Ovary (tissue), 10 donors: ENCODE measurements at regions of chrX and their contacts with region 1.

Region 1: DNA sequence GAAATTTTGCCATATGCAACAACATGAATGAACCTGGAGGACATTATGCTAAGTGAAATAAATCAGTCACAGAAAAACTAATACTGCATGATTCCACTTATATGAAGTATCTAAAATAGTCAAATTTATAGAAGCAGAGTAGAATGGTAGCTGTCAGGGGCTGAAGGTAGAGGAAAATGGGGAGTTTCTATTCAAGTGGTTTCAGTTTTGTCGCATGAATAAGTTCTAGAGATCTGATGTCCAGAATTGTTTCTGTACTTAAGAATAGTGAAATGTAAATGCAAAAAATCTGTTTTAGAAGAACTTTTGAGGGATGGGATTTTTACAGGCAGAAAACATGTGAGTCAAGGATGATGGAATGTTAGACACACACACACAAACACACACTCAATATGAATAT is 34.1 kb downstream of the SLITRK4 start:
- DNase-seq: no peak
- H3K4me3 ChIP-seq: no peak overlapping the region
- H3K27ac ChIP-seq: no peak overlapping the region
- H3K4me1 ChIP-seq: no peaks in the 10 kb centered on the region
- H3K27me3 ChIP-seq: no peaks in the 10 kb centered on the region
- CTCF ChIP-seq: no peak
- EP300 ChIP-seq: no peak
- POLR2A ChIP-seq: no peak

Region 2: DNA sequence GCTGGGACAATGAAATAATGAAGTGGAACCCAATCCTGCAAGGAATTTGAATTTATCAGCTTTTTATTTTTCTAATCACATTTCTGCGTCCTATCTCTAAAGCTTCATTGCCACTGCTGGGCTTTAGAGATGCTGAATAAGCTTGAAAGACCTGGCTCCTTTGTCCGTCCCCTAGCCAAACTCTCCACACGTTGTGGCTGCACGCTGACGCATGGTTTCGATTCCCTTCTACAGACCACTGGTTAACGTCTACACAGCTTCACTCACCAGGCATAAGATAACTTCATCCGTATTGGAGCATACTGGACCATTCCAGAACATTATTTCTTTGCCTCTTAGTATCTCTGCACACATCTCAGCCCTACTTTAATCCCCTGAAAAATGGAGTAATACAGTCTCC is 115.7 kb before region 1 on chrX:
- intact Hi-C with region 1: no loop called
- DNase-seq: no peak
- H3K4me3 ChIP-seq: no peak overlapping the region
- H3K27ac ChIP-seq: no peak overlapping the region
- H3K4me1 ChIP-seq: no peaks in the 10 kb centered on the region
- H3K27me3 ChIP-seq: no peaks in the 10 kb centered on the region
- CTCF ChIP-seq: no peak
- EP300 ChIP-seq: no peak
- POLR2A ChIP-seq: no peak

Region 3: DNA sequence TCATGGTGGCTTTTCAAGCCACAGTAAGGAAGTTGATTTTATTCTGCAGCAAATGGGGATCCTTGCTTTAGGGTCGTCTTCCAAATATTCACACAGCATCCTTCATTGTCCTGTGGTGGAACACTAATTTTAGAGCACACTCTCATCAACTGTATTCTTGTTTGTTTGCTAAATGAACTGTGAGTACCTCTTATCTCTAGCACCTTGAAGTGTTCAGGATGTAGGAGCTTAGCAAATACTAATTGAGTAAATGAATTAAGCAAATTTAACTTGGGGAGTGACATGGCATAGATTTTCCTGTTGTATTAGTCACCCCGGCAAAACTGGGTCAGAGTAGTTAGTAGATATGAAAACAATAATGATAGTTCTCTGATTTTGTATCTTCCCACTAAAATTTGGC is 439.0 kb after region 1 on chrX:
- intact Hi-C with region 1: loop called in 1 of 4 experiments (anchors 5 kb)
- DNase-seq: no peak
- H3K4me3 ChIP-seq: no peak overlapping the region
- H3K27ac ChIP-seq: no peak overlapping the region
- H3K4me1 ChIP-seq: no peaks in the 10 kb centered on the region
- H3K27me3 ChIP-seq: no peaks in the 10 kb centered on the region
- CTCF ChIP-seq: no peak
- EP300 ChIP-seq: no peak
- POLR2A ChIP-seq: no peak